ENCODE measurements at regions of chr6 and their contacts with region 1.

Region 1: DNA sequence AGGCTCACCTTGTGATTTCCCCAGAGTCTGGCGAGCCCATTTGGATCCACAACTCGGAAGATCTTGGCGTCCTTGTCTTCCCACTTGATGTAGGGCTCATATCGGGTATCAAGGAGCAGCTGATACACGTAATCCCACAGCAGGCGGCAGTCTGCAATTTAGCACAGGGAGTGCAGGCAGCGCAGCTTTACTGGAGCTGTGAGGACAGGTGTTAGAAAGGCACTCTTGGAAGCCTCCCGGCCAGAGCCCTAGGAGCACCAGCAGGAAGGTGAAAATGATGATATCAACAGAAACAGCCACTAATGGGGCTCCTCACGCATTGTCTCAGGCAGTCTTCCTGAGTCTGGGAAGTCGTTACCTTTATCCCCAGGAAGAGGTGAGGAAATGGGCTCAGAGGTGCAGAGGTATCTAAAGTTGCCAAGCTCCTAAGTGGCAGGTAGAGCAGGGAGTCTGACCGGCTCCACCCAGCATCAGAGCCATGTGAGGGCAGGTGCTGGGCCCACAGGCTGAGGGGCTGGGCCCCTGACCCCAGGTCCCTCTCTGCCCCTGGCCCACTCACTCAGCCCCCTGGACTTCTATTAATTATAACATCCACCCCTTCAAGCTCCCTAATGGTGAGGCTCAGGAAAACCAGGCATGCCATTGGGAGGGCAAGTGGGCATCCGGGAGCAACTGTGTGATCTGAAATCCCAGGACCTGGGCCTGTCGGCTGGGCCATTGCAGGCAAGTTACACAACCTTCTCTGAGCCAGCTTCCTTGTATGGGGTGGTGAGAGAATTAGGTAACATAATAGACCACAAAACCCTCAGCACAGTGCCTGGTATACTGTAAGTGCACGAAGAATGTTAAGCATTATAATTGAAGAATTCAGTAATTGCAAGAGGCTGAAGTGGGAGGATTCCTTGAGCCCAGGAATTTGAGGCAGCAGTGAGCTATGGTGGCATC is 18.3 kb downstream of the ETV7 start:
- DNase-seq: no peak
- H3K4me3 ChIP-seq: no peak overlapping the region
- CTCF ChIP-seq: no peak

Region 2: GRCh38 chr6:36302227-36302976 is 66.8 kb before region 1 on chr6:
- in situ Hi-C with region 1: loop called (anchors 5 kb)
- DNase-seq: peak; percentile 86
- H3K4me3 ChIP-seq: no peak overlapping the region
- CTCF ChIP-seq: peak; percentile 98

Region 3: DNA sequence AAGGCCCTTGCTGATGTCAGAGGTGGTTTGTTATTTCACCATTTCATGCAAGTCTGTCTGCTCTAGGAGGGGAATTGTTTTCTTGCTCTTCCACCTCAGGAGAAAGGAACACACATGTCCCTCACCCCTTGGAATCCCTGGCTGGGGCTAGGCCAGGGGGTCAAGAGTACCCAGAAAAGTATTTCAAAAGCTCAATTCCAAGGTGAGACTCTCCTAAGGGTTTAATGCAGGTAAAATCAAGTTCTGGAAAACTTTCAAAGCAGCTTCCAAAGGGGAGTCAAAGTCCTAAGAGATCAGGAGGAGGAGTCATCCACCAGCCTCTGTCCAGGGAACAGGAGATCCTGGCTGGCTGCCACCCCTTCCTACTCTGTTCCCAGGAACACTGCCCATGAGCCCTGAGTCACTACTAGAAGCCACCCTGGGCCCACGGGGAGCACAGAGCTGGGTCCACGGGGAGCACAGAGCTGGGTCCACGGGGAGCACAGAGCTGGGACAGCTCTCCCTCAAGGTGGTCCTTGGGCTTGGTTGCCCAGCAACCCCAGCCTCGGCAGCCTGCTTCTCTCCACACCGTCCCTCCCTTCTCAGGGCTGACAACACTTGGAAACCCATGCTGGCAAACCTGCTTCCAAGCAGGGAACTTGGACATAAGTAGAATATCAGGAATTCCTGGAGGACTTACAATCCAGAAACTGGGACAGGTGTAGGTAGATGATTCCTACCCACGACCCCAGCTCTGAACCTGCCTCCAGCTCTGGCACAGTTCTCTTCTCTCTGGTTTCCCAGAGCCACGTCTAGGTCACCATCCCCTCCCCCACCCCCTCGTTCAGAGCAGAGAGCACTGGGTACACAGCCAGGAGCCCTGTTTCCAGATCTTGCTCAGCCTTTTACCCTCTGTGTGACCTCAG is 274.0 kb after region 1 on chr6:
- in situ Hi-C with region 1: no loop called
- DNase-seq: peak; percentile 62
- H3K4me3 ChIP-seq: no peak overlapping the region
- CTCF ChIP-seq: no peak

Measured in astrocyte of the cerebellum (primary cell).